Heart left ventricle (tissue), 16 donors: ENCODE measurements at regions of chr1 and their contacts with region 1.

Region 1: GRCh38 chr1:23168457-23169194 is at the start of gene LUZP1:
- DNase-seq: peak; percentile 91 to 97 (median 92)
- ATAC-seq: peak; percentile 91 to 95 (median 92)
- H3K4me3 ChIP-seq: peak within 1 kb of the TSS; percentile 67 to 98 (median 86)
- H3K27ac ChIP-seq: peak within 1 kb of the TSS; percentile 88 to 98 (median 94)
- H3K4me1 ChIP-seq: peaks cover 0 to 54% (median 43%) of the 10 kb centered on the region in 12 donors
- H3K27me3 ChIP-seq: no peaks in the 10 kb centered on the region
- CTCF ChIP-seq: no peak
- POLR2A ChIP-seq: peak; percentile 97 to 98
- total RNA-seq, gene LUZP1: 24.7 to 42.3 (median 32.6) TPM

Region 2: DNA sequence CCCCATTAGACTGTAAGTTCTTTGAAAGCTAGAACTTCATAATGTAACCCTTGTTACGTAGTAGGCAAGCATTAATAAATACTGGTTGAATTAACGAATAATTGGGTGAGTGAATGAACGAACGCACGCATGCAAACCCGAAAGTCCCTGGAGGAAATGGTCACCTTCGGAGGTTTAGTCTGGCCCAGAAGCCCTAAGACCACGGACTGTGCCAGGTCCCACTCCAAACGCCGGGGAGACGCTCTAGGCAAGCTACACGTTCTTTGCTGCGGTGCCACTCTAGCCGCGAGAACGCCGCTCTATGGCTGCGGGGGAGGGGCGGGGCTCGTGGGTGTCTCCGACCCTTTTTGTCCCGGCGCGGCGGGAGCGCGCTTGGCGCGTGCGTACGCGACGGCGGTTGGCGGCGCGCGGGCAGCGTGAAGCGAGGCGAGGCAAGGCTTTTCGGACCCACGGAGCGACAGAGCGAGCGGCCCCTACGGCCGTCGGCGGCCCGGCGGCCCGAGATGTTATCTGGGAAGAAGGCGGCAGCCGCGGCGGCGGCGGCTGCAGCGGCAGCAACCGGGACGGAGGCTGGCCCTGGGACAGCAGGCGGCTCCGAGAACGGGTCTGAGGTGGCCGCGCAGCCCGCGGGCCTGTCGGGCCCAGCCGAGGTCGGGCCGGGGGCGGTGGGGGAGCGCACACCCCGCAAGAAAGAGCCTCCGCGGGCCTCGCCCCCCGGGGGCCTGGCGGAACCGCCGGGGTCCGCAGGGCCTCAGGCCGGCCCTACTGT is 149.3 kb before region 1 on chr1 and contains the start of gene KDM1A:
- intact Hi-C with region 1: loop called in 1 of 10 experiments (anchors 5 kb)
- DNase-seq: peak; percentile 97 to 99 (median 98)
- ATAC-seq: peak; percentile 99 to 100 (median 100)
- H3K4me3 ChIP-seq: peak within 1 kb of the TSS; percentile 68 to 98 (median 90)
- H3K27ac ChIP-seq: peak within 1 kb of the TSS; percentile 60 to 91 (median 83)
- H3K4me1 ChIP-seq: peaks cover 0 to 22% (median 10%) of the 10 kb centered on the region in 12 donors
- H3K27me3 ChIP-seq: no peaks in the 10 kb centered on the region
- CTCF ChIP-seq: peak in 4 of 12 donors; percentile 10 to 44 (median 36)
- POLR2A ChIP-seq: peak in 1 of 2 donors; percentile 74
- total RNA-seq, gene KDM1A: 27.2 to 37.2 (median 29.7) TPM

Region 3: GRCh38 chr1:23122023-23122748 is 46.4 kb before region 1 on chr1:
- intact Hi-C with region 1: loop called in 1 of 10 experiments (anchors 5 kb)
- DNase-seq: peak in 2 of 5 donors; percentile 21 to 38
- ATAC-seq: peak in 3 of 4 donors; percentile 44 to 51 (median 45)
- H3K4me3 ChIP-seq: peak overlapping the region in 2 of 12 donors; percentile 6 to 9
- H3K27ac ChIP-seq: peak overlapping the region in 6 of 12 donors; percentile 16 to 69 (median 26)
- H3K4me1 ChIP-seq: peaks cover 3 to 87% (median 50%) of the 10 kb centered on the region in 12 donors
- H3K27me3 ChIP-seq: no peaks in the 10 kb centered on the region
- CTCF ChIP-seq: no peak
- POLR2A ChIP-seq: no peak